Sigmoid colon (tissue), 7 donors: ENCODE measurements at regions of chr2 and their contacts with region 1.

Region 1: GRCh38 chr2:127591221-127591923 is 54.6 kb upstream of the GPR17 start:
- DNase-seq: peak; percentile 85
- H3K4me3 ChIP-seq: no peak overlapping the region
- H3K27ac ChIP-seq: no peak overlapping the region
- H3K4me1 ChIP-seq: no peaks in the 10 kb centered on the region
- H3K27me3 ChIP-seq: no peaks in the 10 kb centered on the region
- CTCF ChIP-seq: peak; percentile 81 to 94 (median 90)
- EP300 ChIP-seq: no peak
- POLR2A ChIP-seq: no peak

Region 2: DNA sequence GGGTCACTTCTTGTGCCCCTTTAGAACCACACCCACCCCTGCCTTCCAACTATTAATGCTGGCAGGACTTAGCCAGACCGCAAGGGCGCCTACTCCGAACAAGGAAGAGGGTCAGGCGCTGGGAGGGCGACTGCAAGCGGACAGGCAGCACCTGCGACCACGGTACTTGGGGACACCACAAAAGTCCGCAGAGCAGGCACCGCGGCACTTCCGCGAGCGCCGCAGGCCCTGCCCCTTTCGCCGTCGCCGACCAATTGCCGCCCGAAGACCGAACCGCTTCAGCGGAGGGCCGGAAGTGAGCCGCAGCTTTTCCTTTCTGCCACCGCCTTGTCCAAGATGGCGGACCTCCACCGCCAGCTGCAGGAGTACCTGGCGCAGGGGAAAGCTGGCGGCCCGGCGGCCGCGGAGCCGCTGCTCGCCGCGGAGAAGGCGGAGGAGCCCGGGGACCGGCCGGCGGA is 109.8 kb after region 1 on chr2 and contains the start of gene SFT2D3:
- intact Hi-C with region 1: loop called (anchors 2 kb)
- DNase-seq: peak; percentile 96
- H3K4me3 ChIP-seq: peak within 1 kb of the TSS; percentile 49 to 95 (median 78)
- H3K27ac ChIP-seq: peak within 1 kb of the TSS; percentile 92 to 100 (median 94)
- H3K4me1 ChIP-seq: peaks cover 0 to 39% (median 33%) of the 10 kb centered on the region in 4 donors
- H3K27me3 ChIP-seq: no peaks in the 10 kb centered on the region
- CTCF ChIP-seq: no peak
- EP300 ChIP-seq: no peak
- POLR2A ChIP-seq: peak; percentile 79 to 84
- total RNA-seq, gene SFT2D3: 5.6 to 8.6 (median 7.9) TPM